CD8-positive, alpha-beta T cell (primary cell): ENCODE measurements at regions of chr18 and their contacts with region 1.

Region 1: GRCh38 chr18:79679111-79679872 is at the start of gene CTDP1:
- DNase-seq: peak; percentile 96 to 100 (median 99)
- ATAC-seq: peak; percentile 82
- H3K4me3 ChIP-seq: peak within 1 kb of the TSS; percentile 98 to 99
- H3K4me3 Mint-ChIP-seq: peak within 1 kb of the TSS; percentile 97
- H3K27ac ChIP-seq: peak within 1 kb of the TSS; percentile 94 to 100
- H3K27ac Mint-ChIP-seq: peak within 1 kb of the TSS; percentile 99
- H3K4me1 ChIP-seq: peaks cover 54% of the 10 kb centered on the region
- H3K4me1 Mint-ChIP-seq: peaks cover 67% of the 10 kb centered on the region
- H3K27me3 ChIP-seq: no peaks in the 10 kb centered on the region
- H3K27me3 Mint-ChIP-seq: no peaks in the 10 kb centered on the region
- CTCF ChIP-seq: no peak
- total RNA-seq, gene CTDP1: 110 to 121 TPM

Region 2: DNA sequence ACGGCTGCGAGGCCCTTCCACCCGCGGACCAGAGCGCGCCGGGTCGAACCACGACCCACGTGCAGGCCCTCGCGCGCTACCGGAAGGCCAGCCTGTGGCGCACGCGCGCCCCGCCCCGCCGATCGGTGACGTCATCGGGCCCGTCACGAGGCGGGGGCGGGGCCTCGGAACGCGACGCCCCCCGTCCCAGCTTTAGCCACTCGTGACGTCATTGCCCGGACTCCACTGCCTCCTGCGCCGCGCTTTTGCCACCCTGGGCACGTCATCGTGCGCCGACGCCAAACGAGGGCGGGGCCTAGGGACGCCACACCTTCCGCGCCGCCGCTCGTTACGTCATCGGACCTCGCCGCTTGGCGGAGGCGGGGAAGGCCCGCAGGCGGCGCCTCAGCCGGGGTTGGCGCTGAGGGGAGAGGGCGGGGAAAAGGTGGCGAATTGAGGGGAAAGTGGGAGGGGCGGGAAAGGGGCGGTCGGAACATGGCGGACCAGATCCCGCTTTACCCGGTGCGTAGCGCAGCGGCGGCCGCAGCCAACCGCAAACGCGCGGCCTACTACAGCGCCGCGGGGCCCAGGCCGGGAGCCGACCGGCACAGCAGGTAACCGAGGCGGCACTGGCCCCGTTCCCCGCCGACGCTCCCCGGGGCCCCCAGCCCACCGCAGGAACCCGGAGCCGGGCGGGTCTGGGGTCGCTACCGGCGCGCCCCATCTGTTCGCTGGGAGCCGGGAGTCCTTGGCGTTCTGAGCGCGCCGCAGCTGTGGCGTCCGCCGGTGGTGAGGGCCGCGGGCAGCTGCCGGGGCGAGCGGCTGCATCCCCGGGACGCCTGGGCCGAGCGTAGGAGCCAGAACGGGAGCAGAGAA is 610.1 kb before region 1 on chr18 and contains the start of gene ATP9B:
- CTCF ChIA-PET with region 1: interaction called, 3 read pairs
- POLR2A ChIA-PET with region 1: interaction called, 3 read pairs
- intact Hi-C with region 1: loop called (anchors 1 to 2 kb)
- DNase-seq: peak; percentile 96 to 99 (median 98)
- ATAC-seq: peak; percentile 81
- H3K4me3 ChIP-seq: peak within 1 kb of the TSS; percentile 76 to 93
- H3K4me3 Mint-ChIP-seq: peak within 1 kb of the TSS; percentile 93
- H3K27ac ChIP-seq: peak within 1 kb of the TSS; percentile 96 to 98
- H3K27ac Mint-ChIP-seq: peak within 1 kb of the TSS; percentile 100
- H3K4me1 ChIP-seq: peaks cover 29% of the 10 kb centered on the region
- H3K4me1 Mint-ChIP-seq: peaks cover 51% of the 10 kb centered on the region
- H3K27me3 ChIP-seq: no peaks in the 10 kb centered on the region
- H3K27me3 Mint-ChIP-seq: peaks cover 2% of the 10 kb centered on the region
- CTCF ChIP-seq: no peak
- total RNA-seq, gene ATP9B: 60.8 to 61.1 TPM

Region 3: DNA sequence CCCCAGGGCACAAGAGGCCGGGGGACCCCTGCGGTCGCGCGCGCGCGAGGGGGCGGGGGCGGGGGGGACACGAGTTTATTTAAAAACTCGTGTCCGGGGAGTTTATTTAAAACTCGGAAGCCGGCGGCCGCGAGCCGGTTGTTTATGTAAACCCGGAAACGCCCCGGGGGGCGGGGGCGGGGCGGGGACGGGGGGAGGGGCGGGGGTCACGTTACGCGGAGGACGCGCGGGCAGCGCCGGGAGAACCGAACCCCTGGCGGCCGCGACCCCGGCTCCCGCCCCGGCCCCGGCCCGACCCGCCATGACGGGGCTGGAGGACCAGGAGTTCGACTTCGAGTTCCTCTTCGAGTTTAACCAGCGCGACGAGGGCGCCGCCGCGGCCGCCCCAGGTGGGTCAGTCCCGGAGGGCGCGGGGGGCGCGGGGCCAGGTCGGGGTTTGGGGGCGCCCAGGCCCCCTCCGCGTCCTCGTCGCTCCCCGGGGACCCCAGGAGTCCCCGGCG is 279.2 kb before region 1 on chr18:
- CTCF ChIA-PET with region 1: no interaction called
- POLR2A ChIA-PET with region 1: interaction called, 8 read pairs
- intact Hi-C with region 1: loop called (anchors 2 to 5 kb)
- DNase-seq: peak; percentile 43 to 80 (median 72)
- ATAC-seq: peak; percentile 33
- H3K4me3 ChIP-seq: peak overlapping the region; percentile 58 to 59
- H3K4me3 Mint-ChIP-seq: peak overlapping the region; percentile 87
- H3K27ac ChIP-seq: peak overlapping the region; percentile 53 to 59
- H3K27ac Mint-ChIP-seq: no peak overlapping the region
- H3K4me1 ChIP-seq: peaks cover 54% of the 10 kb centered on the region
- H3K4me1 Mint-ChIP-seq: peaks cover 47% of the 10 kb centered on the region
- H3K27me3 ChIP-seq: peaks cover 0 to 3% of the 10 kb centered on the region in 2 experiments
- H3K27me3 Mint-ChIP-seq: no peaks in the 10 kb centered on the region
- CTCF ChIP-seq: no peak

Region 4: DNA sequence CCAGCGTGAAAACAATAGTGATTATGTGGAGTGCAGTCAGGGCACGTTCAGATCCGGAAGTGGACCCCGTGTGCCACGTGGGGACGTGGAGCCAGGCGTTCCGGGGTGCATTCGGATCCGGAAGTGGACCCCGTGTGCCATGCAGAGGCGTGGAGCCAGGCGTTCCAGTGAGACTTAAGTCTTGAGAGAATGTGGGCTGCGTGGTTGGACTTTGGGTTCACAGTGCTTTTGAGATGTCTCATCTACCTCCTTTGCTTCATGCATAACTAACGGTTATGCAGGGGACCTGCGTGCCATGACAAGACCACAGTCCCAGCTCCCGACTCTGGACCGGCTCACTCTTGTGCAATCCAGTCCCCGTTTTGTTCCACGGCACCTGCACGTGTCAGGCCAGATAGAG is 29.1 kb after region 1 on chr18:
- CTCF ChIA-PET with region 1: no interaction called
- POLR2A ChIA-PET with region 1: no interaction called
- intact Hi-C with region 1: no loop called
- DNase-seq: no peak
- ATAC-seq: no peak
- H3K4me3 ChIP-seq: no peak overlapping the region
- H3K4me3 Mint-ChIP-seq: no peak overlapping the region
- H3K27ac ChIP-seq: no peak overlapping the region
- H3K27ac Mint-ChIP-seq: no peak overlapping the region
- H3K4me1 ChIP-seq: no peaks in the 10 kb centered on the region
- H3K4me1 Mint-ChIP-seq: peaks cover 7% of the 10 kb centered on the region
- H3K27me3 ChIP-seq: no peaks in the 10 kb centered on the region
- H3K27me3 Mint-ChIP-seq: no peaks in the 10 kb centered on the region
- CTCF ChIP-seq: no peak

Region 5: GRCh38 chr18:79912409-79912991 is 233.2 kb after region 1 on chr18:
- CTCF ChIA-PET with region 1: no interaction called
- POLR2A ChIA-PET with region 1: no interaction called
- intact Hi-C with region 1: loop called (anchors 5 kb)
- DNase-seq: peak in 8 of 9 experiments; percentile 39 to 82 (median 60)
- ATAC-seq: peak; percentile 74
- H3K4me3 ChIP-seq: no peak overlapping the region
- H3K4me3 Mint-ChIP-seq: peak overlapping the region; percentile 16
- H3K27ac ChIP-seq: peak overlapping the region; percentile 8 to 51
- H3K27ac Mint-ChIP-seq: peak overlapping the region; percentile 96
- H3K4me1 ChIP-seq: peaks cover 43% of the 10 kb centered on the region
- H3K4me1 Mint-ChIP-seq: peaks cover 33% of the 10 kb centered on the region
- H3K27me3 ChIP-seq: no peaks in the 10 kb centered on the region
- H3K27me3 Mint-ChIP-seq: no peaks in the 10 kb centered on the region
- CTCF ChIP-seq: no peak

Region 6: DNA sequence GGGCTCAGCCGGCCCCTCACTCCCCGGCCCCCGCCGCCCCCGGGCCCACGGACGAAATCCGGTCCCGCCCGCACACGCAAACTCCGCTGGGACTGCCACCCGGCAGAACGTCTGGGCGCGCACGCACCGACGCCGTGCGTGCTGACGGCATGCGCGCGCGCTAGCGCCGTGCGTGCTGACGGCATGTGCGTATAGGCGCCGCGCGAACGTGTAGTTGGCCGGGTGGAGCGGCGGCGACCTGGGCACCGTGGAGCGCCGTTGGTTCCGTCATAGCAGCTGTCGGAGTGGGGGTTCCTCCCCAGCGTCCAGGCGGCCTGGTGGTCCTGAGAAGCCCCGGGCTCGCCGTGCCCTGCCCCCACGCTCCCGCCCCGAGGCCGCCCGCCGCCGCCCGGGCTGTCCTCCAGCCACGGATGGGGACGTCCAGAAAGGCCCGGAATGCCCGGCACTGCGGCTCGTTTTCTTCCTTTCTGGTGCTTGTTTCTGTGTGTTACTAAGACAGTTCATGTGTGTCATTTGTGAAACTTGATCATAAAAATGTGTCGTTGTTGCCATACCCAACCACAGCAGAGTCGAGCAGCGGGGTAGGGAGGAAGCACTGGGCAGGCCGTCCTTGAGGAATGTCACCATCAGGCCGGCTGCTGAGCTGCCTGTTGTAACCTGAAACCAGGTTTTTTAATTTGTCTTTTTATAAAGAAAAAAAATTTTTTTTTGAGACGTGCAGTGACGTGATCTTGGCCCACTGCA is 309.3 kb after region 1 on chr18 and contains the start of gene TXNL4A:
- CTCF ChIA-PET with region 1: no interaction called
- POLR2A ChIA-PET with region 1: no interaction called
- intact Hi-C with region 1: loop called (anchors 1 to 2 kb)
- DNase-seq: peak; percentile 67 to 95 (median 83)
- ATAC-seq: peak; percentile 95
- H3K4me3 ChIP-seq: peak within 1 kb of the TSS; percentile 74 to 97
- H3K4me3 Mint-ChIP-seq: peak within 1 kb of the TSS; percentile 90
- H3K27ac ChIP-seq: peak within 1 kb of the TSS; percentile 91 to 98
- H3K27ac Mint-ChIP-seq: peak within 1 kb of the TSS; percentile 96
- H3K4me1 ChIP-seq: peaks cover 40% of the 10 kb centered on the region
- H3K4me1 Mint-ChIP-seq: peaks cover 43% of the 10 kb centered on the region
- H3K27me3 ChIP-seq: no peaks in the 10 kb centered on the region
- H3K27me3 Mint-ChIP-seq: no peaks in the 10 kb centered on the region
- CTCF ChIP-seq: no peak
- total RNA-seq, gene TXNL4A: 62.0 to 69.0 TPM